Caco-2 (cell line): ENCODE measurements at regions of chr19 and their contacts with region 1.

Region 1: DNA sequence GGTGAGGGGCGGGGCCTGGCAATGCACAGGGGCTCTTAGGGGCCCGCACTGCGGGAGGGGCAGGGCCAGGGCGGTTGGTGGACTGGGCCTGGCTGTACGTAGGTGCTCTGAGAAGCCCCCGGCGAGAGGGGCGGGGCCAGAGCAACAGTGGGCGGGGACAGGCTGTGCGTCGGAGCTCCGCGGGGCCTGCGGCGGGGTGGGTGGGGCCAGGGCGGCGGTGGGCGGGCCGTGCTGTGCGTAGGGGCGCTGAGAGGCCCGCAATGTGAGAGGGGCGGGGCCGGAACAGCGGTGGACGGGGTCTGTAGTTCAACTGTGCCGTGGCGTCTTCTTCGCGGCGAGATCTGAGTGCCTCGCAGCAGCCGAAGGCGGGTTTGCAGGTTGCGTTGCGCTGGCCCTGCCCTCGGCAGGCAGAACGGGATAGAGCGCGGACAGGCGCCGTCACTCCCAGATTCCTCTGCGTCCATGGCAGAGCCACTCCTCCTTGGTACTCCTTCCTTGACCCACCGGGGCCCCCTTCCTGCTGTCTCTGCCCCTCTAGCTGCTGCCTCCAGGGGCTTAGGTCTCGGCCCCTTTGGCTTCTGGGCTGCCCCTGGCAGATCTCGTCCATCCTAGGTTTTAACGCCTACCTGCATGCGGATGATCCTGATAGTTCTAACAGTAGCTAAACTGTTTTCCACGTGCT is 33.2 kb downstream of the CCNE1 start:
- DNase-seq: peak; percentile 98
- H3K4me3 ChIP-seq: peak overlapping the region; percentile 63
- H3K4me3 Mint-ChIP-seq: peak overlapping the region; percentile 89
- H3K27ac Mint-ChIP-seq: peak overlapping the region; percentile 85
- H3K4me1 ChIP-seq: peaks cover 43% of the 10 kb centered on the region
- H3K4me1 Mint-ChIP-seq: peaks cover 37% of the 10 kb centered on the region
- H3K27me3 ChIP-seq: no peaks in the 10 kb centered on the region
- H3K27me3 Mint-ChIP-seq: no peaks in the 10 kb centered on the region
- CTCF ChIP-seq: peak in 1 of 2 experiments; percentile 1

Region 2: DNA sequence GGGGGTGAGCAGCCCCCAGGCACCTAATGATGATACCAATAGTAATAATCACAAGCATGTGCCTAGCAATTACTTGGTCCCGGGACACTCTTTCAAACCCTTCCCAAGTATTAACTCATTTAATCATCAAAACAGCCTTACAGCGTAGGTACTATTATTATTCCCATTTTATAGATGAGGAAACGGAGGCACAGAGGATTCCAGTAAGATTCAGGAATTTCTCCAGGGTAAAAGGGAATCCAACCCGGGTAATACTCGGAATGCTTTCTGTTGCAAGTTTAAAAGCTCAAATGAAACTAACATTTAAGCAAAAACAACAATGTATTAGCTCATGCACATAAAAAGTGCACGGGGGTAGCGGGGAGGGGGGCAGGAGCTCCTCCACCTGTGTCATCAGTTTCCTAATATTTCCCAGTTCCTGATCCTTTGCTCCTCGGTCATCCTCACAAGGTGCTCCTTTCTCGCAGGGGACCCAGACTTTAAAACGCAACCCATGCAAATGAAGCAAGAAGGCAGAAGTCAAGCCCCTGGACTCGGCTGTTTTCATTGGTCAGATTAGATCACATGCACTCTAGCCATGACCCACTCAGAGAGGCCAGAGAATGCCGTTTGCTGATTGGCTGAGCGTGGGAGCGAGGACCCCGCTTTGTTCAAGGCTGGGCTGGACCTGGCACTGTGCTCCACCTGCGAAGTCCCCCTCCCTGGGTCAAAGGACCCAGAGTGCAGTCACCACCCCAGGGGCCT is 91.7 kb before region 1 on chr19:
- CTCF ChIA-PET with region 1: no interaction called
- POLR2A ChIA-PET with region 1: no interaction called
- intact Hi-C with region 1: no loop called
- DNase-seq: no peak
- H3K4me3 ChIP-seq: no peak overlapping the region
- H3K4me3 Mint-ChIP-seq: no peak overlapping the region
- H3K27ac Mint-ChIP-seq: no peak overlapping the region
- H3K4me1 ChIP-seq: no peaks in the 10 kb centered on the region
- H3K4me1 Mint-ChIP-seq: no peaks in the 10 kb centered on the region
- H3K27me3 ChIP-seq: no peaks in the 10 kb centered on the region
- H3K27me3 Mint-ChIP-seq: peaks cover 4% of the 10 kb centered on the region
- CTCF ChIP-seq: no peak

Region 3: GRCh38 chr19:29811125-29812079 is 33.6 kb before region 1 on chr19 and contains the start of gene CCNE1:
- CTCF ChIA-PET with region 1: interaction called, 3 read pairs
- POLR2A ChIA-PET with region 1: no interaction called
- intact Hi-C with region 1: loop called (anchors 1 kb)
- DNase-seq: peak; percentile 93 to 95
- H3K4me3 ChIP-seq: peak within 1 kb of the TSS; percentile 73
- H3K4me3 Mint-ChIP-seq: peak within 1 kb of the TSS; percentile 75
- H3K27ac Mint-ChIP-seq: peak within 1 kb of the TSS; percentile 83
- H3K4me1 ChIP-seq: peaks cover 5% of the 10 kb centered on the region; the same call in 1 of the 2 replicates
- H3K4me1 Mint-ChIP-seq: peaks cover 5% of the 10 kb centered on the region
- H3K27me3 ChIP-seq: no peaks in the 10 kb centered on the region
- H3K27me3 Mint-ChIP-seq: no peaks in the 10 kb centered on the region
- CTCF ChIP-seq: no peak
- total RNA-seq, gene CCNE1: 29.7 and 33.2 TPM in 2 replicates

Region 4: DNA sequence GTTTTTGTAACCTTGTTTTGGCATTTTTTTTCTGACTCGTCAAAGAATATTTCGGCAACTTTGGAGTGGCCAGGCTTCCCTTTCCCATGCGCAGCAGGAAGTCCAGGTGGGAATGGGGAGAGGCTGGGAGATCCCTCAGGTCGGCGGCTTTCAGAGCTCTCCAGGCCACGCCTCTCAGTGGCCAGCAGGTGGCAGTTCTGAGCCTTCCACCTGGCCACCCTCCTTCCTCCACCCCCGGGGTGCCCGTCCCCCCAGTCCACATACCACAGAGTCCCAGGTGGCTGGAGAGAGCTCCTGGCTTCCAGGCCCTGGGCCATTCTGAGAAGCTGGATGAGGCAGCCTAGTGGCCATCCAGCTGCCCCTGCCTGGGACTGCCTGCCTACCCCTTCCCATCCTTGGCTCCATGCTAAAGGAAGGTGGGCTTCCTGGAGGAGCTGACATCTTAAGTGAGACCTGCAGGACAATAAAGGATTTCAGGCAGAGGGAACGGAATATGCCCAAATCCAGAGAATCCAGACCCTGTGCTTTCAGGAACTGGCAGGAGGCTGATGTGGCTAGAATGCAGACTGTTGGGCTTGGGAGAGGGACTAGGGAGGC is 13.1 kb after region 1 on chr19:
- CTCF ChIA-PET with region 1: interaction called, 11 read pairs
- POLR2A ChIA-PET with region 1: no interaction called
- intact Hi-C with region 1: no loop called
- DNase-seq: peak; percentile 74 to 82
- H3K4me3 ChIP-seq: no peak overlapping the region
- H3K4me3 Mint-ChIP-seq: no peak overlapping the region
- H3K27ac Mint-ChIP-seq: no peak overlapping the region
- H3K4me1 ChIP-seq: peaks cover 11% of the 10 kb centered on the region
- H3K4me1 Mint-ChIP-seq: peaks cover 13% of the 10 kb centered on the region
- H3K27me3 ChIP-seq: no peaks in the 10 kb centered on the region
- H3K27me3 Mint-ChIP-seq: no peaks in the 10 kb centered on the region
- CTCF ChIP-seq: peak; percentile 86

Region 5: DNA sequence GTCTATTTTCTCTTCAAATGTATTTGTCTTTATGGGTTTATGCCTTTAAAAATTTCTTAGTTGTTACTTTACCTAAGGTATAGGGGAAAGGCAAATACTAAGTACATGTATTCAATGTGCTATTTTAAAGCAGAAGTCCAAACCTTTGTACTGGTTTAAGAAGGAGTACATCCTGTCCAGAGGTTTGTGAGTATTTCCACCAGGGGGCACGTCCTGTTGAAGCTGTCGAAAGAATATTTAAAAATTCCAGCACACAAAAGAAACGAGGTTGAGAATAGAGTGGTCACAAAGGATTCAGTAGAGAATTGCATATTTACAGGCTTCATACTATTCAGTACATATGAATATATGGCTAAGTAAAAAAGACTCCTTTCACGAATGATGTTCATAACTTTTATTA is 156.8 kb after region 1 on chr19:
- CTCF ChIA-PET with region 1: no interaction called
- POLR2A ChIA-PET with region 1: no interaction called
- intact Hi-C with region 1: no loop called
- DNase-seq: peak in 1 of 2 experiments; percentile 10
- H3K4me3 ChIP-seq: no peak overlapping the region
- H3K4me3 Mint-ChIP-seq: no peak overlapping the region
- H3K27ac Mint-ChIP-seq: no peak overlapping the region
- H3K4me1 ChIP-seq: peaks cover 7% of the 10 kb centered on the region; the same call in 1 of the 2 replicates
- H3K4me1 Mint-ChIP-seq: peaks cover 23% of the 10 kb centered on the region
- H3K27me3 ChIP-seq: no peaks in the 10 kb centered on the region
- H3K27me3 Mint-ChIP-seq: no peaks in the 10 kb centered on the region
- CTCF ChIP-seq: peak in 1 of 2 experiments; percentile 35

Region 6: DNA sequence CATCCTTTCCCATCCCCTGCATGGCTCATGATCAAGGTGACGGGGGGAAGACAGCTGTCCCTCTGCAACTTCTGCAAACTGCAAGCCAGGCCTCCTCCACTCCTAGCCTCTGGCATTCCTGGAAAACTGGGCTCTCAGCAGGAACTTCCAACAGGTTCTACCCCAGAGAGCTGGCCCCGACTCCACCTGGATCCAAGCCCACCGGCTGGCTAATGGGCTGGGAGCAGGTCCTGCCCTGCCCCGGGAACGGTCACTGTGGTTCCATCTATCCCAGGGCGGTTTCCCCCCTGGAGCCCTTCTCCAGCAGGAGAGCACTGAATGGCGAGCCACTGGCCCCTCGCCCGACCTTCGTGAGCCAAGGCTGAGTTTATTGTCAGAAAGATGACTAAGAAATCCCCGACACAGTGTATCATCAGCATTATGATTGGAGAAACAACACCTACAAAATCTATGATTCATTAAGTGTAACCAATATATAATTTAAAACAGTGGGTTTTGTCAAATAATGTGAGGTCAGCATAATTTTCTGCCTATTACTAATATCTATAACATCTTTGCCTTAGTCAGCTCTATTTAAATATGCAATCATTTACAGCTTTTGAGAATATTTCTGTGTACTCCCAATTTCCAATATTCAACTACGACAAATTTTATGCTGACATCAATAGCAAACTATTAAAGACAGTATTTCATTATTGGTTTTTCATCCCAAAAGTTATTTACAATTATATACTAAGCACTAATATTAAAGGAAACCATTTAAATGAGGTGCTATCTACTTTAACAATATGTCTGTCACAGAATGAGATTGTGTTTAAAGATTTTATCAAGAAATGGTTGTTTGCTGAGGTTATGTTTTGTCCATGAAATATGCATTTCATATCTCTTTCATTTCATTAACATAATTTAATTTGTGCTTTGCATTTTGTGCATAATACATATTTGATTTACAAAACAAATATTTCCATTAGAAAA is 230.0 kb after region 1 on chr19:
- CTCF ChIA-PET with region 1: no interaction called
- POLR2A ChIA-PET with region 1: no interaction called
- intact Hi-C with region 1: no loop called
- DNase-seq: peak in 1 of 2 experiments; percentile 18
- H3K4me3 ChIP-seq: no peak overlapping the region
- H3K4me3 Mint-ChIP-seq: no peak overlapping the region
- H3K27ac Mint-ChIP-seq: no peak overlapping the region
- H3K4me1 ChIP-seq: no peaks in the 10 kb centered on the region
- H3K4me1 Mint-ChIP-seq: no peaks in the 10 kb centered on the region
- H3K27me3 ChIP-seq: no peaks in the 10 kb centered on the region
- H3K27me3 Mint-ChIP-seq: peaks cover 12% of the 10 kb centered on the region
- CTCF ChIP-seq: no peak